ENCODE measurements at regions of chr11 and their contacts with region 1.

Region 1: GRCh38 chr11:130854483-130854882 is 61.8 kb downstream of the SNX19 start:
- DNase-seq: no peak
- ATAC-seq: no peak
- H3K4me3 Mint-ChIP-seq: no peak overlapping the region
- H3K27ac Mint-ChIP-seq: no peak overlapping the region
- H3K4me1 Mint-ChIP-seq: no peaks in the 10 kb centered on the region
- H3K27me3 Mint-ChIP-seq: peaks cover 17% of the 10 kb centered on the region
- CTCF ChIP-seq: no peak

Region 2: DNA sequence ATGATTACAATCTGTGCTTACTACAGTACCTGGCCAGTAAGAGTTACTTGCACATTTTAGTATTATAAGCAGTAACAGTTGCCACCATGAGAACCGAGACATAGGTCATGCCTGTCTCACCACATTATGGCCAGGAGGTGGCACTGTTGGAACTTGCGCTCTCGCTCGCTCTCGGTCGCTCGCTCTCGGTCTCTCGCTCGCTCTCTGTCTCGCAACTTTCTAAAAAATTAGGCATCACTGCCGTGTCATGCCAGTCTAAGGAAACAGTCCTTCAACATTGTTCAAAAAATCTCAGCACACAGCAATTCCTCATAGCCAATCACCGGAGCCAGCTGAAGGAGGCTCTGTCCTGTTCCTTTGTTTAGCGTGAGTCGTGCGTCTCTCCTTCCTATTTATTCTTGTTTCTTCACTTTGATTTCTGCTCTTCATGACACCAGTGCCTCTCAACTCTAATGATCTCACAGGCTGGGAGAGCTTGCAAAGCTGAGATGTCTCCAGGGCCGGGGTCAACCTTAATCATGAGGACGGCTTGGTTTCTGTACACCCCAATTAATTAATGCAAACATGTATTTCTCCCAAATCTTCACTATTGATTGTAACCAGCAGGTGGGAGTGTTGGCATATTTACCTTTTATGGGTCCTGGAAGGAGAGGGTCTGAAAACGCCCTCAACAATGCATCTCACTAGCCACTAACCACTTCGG is 419.8 kb before region 1 on chr11:
- CTCF ChIA-PET with region 1: interaction called, 279 read pairs
- POLR2A ChIA-PET with region 1: no interaction called
- intact Hi-C with region 1: no loop called
- DNase-seq: peak; percentile 77
- ATAC-seq: peak; percentile 83
- H3K4me3 Mint-ChIP-seq: no peak overlapping the region
- H3K27ac Mint-ChIP-seq: no peak overlapping the region
- H3K4me1 Mint-ChIP-seq: peaks cover 10% of the 10 kb centered on the region
- H3K27me3 Mint-ChIP-seq: peaks cover 16% of the 10 kb centered on the region
- CTCF ChIP-seq: peak; percentile 84